ENCODE measurements at regions of chr5 and their contacts with region 1.

Region 1: DNA sequence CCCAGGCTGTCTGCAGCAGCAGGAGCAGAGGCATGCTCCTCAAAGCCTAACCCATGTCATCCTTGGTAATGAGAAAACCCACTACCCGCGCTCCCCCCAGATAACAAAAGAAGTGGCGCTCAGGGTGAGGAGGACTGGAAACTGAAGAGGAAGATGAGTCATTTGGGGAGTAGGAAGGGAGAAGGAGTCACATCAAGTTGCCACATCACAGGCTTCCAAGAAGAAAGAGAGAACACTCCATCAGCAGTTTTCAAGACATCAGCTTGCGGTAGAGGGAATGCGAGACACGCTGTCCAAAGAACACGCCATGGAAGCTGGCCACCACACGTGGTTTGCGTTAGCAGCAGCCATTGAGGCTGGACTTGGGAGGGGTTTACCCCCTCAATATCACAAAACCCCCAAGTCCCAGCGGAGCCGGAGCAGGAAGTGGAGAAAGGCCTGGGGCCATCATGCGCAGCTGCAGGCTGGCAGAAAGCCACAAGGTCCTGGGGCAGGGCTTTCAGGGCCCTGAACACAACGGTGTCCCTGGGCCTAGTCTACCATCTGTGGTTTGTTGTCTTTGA is 41.5 kb downstream of the SH3PXD2B start:
- DNase-seq: peak; percentile 75 to 80
- H3K4me3 ChIP-seq: no peak overlapping the region
- H3K27ac ChIP-seq: peak overlapping the region; percentile 64
- H3K4me1 ChIP-seq: peaks cover 69% of the 10 kb centered on the region
- H3K27me3 ChIP-seq: no peaks in the 10 kb centered on the region
- CTCF ChIP-seq: no peak

Region 2: GRCh38 chr5:172052450-172053236 is 360.2 kb before region 1 on chr5:
- CTCF ChIA-PET with region 1: no interaction called
- POLR2A ChIA-PET with region 1: interaction called, 11 read pairs
- intact Hi-C with region 1: no loop called
- DNase-seq: no peak
- H3K4me3 ChIP-seq: no peak overlapping the region
- H3K27ac ChIP-seq: no peak overlapping the region
- H3K4me1 ChIP-seq: no peaks in the 10 kb centered on the region
- H3K27me3 ChIP-seq: no peaks in the 10 kb centered on the region
- CTCF ChIP-seq: no peak

Region 3: GRCh38 chr5:172361566-172362238 is 51.1 kb before region 1 on chr5:
- CTCF ChIA-PET with region 1: no interaction called
- POLR2A ChIA-PET with region 1: interaction called, 7 read pairs
- intact Hi-C with region 1: loop called (anchors 5 kb)
- DNase-seq: peak; percentile 81 to 98
- H3K4me3 ChIP-seq: no peak overlapping the region; the same call in 1 of the 2 replicates
- H3K27ac ChIP-seq: peak overlapping the region; percentile 97
- H3K4me1 ChIP-seq: peaks cover 28% of the 10 kb centered on the region
- H3K27me3 ChIP-seq: no peaks in the 10 kb centered on the region
- CTCF ChIP-seq: no peak

Region 4: GRCh38 chr5:172860520-172861443 is 448.0 kb after region 1 on chr5:
- CTCF ChIA-PET with region 1: no interaction called
- POLR2A ChIA-PET with region 1: interaction called, 5 read pairs
- intact Hi-C with region 1: loop called (anchors 5 kb)
- DNase-seq: peak; percentile 64 to 90
- H3K4me3 ChIP-seq: no peak overlapping the region
- H3K27ac ChIP-seq: peak overlapping the region; percentile 99
- H3K4me1 ChIP-seq: peaks cover 65% of the 10 kb centered on the region
- H3K27me3 ChIP-seq: no peaks in the 10 kb centered on the region
- CTCF ChIP-seq: no peak

Measured in PC-9 (cell line).